Gastrocnemius medialis (tissue), 4 donors: ENCODE measurements at regions of chr12 and their contacts with region 1.

Region 1: DNA sequence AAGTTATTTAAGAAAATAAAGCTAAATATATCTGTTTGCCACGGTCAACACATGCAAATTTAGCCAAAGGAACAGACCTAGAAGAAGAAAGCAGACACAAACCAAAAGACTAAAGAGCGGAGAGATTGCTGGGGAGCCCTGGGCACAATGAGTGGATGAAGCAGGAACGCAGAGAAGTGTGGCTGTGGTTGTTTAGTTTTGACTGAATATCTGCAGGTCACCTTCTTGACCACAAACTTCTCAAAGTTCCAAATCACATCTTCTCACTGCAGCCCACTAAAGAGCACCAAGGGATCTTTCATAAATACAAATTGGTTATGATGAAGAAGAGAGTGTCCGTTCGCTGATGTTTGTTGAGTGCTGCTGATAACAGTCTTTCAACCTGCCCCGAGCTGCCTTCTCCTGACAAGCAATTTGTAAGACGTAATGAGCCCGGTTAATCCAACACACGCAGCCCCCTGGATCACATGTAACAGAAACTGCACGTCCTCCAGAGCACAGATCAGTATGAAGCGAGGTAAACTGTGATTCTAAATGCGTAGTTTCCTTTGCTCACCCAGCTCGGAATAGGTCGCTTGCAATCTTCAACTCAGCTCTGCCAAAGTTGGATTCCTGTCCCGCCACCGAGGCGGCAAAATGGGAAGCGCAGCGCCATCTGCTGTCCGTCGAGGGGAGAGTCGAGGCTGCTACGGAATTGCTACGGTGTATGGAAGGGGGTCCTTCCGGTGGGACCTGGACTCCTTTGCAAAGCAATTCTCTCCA is 120.8 kb downstream of the GXYLT1 start:
- DNase-seq: peak; percentile 44 to 58
- ATAC-seq: peak; percentile 80 to 88
- H3K4me3 ChIP-seq: peak overlapping the region; percentile 29 to 51 (median 38)
- H3K27ac ChIP-seq: no peak overlapping the region
- H3K4me1 ChIP-seq: no peaks in the 10 kb centered on the region
- H3K27me3 ChIP-seq: no peaks in the 10 kb centered on the region
- CTCF ChIP-seq: peak; percentile 68 to 94 (median 83)
- POLR2A ChIP-seq: no peak

Region 2: GRCh38 chr12:40946612-40947194 is 1077.2 kb before region 1 on chr12:
- in situ Hi-C with region 1: loop called in 3 of 4 experiments (anchors 10 to 25 kb)
- intact Hi-C with region 1: loop called (anchors 5 kb)
- DNase-seq: no peak
- ATAC-seq: no peak
- H3K4me3 ChIP-seq: no peak overlapping the region
- H3K27ac ChIP-seq: no peak overlapping the region
- H3K4me1 ChIP-seq: no peaks in the 10 kb centered on the region
- H3K27me3 ChIP-seq: no peaks in the 10 kb centered on the region
- CTCF ChIP-seq: peak in 4 of 5 experiments; percentile 37 to 53 (median 40)
- POLR2A ChIP-seq: no peak

Region 3: DNA sequence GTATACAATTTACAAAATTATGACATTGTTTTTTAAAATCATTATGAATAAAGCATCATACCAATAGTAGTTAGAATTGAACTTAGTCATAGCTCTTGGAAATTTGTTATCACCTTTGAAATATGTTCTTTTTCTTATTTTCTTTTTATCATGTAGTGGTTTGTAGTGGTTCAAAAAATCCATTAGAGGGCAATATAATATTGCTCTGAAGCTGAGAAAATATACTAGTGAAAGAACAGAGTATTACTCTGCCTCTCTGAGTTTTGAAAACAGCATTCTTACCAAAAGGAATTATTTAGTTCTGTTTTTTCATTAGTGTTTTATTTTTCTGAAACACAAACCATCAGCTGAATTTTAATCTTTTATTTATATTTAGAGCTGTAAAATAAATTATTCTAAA is 759.6 kb before region 1 on chr12:
- in situ Hi-C with region 1: loop called in 1 of 4 experiments (anchors 25 kb)
- intact Hi-C with region 1: loop called (anchors 2 kb)
- DNase-seq: no peak
- ATAC-seq: no peak
- H3K4me3 ChIP-seq: no peak overlapping the region
- H3K27ac ChIP-seq: no peak overlapping the region
- H3K4me1 ChIP-seq: no peaks in the 10 kb centered on the region
- H3K27me3 ChIP-seq: no peaks in the 10 kb centered on the region
- CTCF ChIP-seq: peak in 1 of 5 experiments; percentile 14
- POLR2A ChIP-seq: no peak

Region 4: GRCh38 chr12:41277116-41277945 is 746.6 kb before region 1 on chr12:
- in situ Hi-C with region 1: loop called (anchors 5 to 25 kb)
- intact Hi-C with region 1: no loop called
- DNase-seq: no peak
- ATAC-seq: no peak
- H3K4me3 ChIP-seq: no peak overlapping the region
- H3K27ac ChIP-seq: no peak overlapping the region
- H3K4me1 ChIP-seq: no peaks in the 10 kb centered on the region
- H3K27me3 ChIP-seq: no peaks in the 10 kb centered on the region
- CTCF ChIP-seq: peak in 4 of 5 experiments; percentile 13 to 48 (median 28)
- POLR2A ChIP-seq: no peak

Region 5: DNA sequence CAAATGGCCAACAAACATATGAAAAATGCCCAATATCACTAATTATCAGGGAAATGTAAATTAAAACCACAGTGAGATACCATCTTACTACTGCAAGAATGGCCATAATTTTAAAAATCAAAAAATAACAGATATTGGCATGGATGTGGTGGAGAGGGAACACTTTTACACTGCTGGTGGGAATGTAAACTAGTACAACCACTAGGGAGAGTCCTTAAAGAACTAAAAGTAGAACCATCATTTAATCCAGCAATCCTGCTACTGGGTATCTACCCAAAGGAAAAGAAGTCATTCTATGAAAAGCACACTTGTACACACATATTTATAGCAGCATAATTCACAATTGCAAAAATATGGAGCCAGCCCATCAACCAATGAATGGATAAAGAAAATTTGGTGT is 338.9 kb before region 1 on chr12:
- in situ Hi-C with region 1: loop called in 2 of 4 experiments (anchors 10 kb)
- intact Hi-C with region 1: loop called (anchors 2 kb)
- DNase-seq: no peak
- ATAC-seq: no peak
- H3K4me3 ChIP-seq: no peak overlapping the region
- H3K27ac ChIP-seq: no peak overlapping the region
- H3K4me1 ChIP-seq: no peaks in the 10 kb centered on the region
- H3K27me3 ChIP-seq: no peaks in the 10 kb centered on the region
- CTCF ChIP-seq: peak in 3 of 5 experiments; percentile 22 to 52 (median 30)
- POLR2A ChIP-seq: no peak

Region 6: GRCh38 chr12:41697161-41697560 is 326.8 kb before region 1 on chr12:
- in situ Hi-C with region 1: loop called in 1 of 4 experiments (anchors 10 kb)
- intact Hi-C with region 1: no loop called
- DNase-seq: no peak
- ATAC-seq: no peak
- H3K4me3 ChIP-seq: no peak overlapping the region
- H3K27ac ChIP-seq: no peak overlapping the region
- H3K4me1 ChIP-seq: no peaks in the 10 kb centered on the region
- H3K27me3 ChIP-seq: no peaks in the 10 kb centered on the region
- CTCF ChIP-seq: no peak
- POLR2A ChIP-seq: no peak